Right ventricle myocardium superior (tissue), 1 donor: ENCODE measurements at regions of chr18 and their contacts with region 1.

Region 1: GRCh38 chr18:48951448-48952286 is 902 bp upstream of the SMAD7 start:
- DNase-seq: peak; percentile 92
- ATAC-seq: peak; percentile 79

Region 2: DNA sequence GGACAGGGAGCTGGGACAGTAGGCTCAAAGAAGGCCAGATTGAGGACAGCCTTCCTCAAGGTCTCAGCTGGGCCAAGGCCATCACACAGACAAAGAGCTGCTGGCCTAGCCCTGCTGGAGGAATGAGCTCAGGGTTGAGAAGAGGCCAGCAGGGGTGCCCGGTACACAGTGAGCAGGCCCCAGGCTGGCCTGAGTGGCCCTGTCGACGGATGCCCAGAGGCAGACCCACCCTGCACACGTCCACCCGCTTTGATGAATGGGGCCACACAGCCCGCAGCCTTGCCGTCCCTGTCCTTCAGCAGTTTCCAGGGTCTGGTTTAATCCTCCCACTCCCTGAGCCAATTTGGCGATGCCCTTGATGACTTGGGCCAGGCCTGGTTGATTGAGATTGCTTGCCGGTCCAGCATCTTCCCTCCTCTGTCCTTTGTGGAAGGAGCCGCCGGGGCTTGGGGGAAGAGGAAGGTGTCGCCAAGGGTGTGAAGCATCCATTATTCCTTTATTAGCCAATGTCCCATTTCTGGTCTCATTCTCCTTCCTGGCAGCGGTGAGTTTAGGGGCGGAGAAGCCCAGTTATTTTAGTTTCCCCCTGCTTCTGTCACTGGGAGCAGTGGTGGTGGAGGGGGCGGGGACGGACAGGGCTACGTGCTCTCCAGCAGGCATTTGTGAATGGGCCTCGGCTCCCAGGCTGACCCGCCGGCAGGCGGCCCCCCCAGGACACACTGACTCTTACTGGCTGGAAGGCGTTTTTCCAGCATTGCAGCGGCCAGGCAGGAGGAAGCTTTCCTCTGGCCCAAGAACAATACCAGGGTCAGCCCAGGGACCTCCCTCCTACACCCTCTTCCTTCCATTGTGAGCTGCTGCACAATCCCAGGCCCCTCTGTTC is 271.1 kb before region 1 on chr18:
- intact Hi-C with region 1: loop called (anchors 5 kb)
- DNase-seq: peak; percentile 89
- ATAC-seq: peak; percentile 88

Region 3: GRCh38 chr18:48781163-48781987 is 170.3 kb before region 1 on chr18:
- intact Hi-C with region 1: loop called (anchors 5 kb)
- DNase-seq: peak; percentile 94
- ATAC-seq: peak; percentile 77

Region 4: GRCh38 chr18:48834413-48835031 is 117.1 kb before region 1 on chr18:
- intact Hi-C with region 1: loop called (anchors 10 kb)
- DNase-seq: peak; percentile 79
- ATAC-seq: peak; percentile 60

Region 5: DNA sequence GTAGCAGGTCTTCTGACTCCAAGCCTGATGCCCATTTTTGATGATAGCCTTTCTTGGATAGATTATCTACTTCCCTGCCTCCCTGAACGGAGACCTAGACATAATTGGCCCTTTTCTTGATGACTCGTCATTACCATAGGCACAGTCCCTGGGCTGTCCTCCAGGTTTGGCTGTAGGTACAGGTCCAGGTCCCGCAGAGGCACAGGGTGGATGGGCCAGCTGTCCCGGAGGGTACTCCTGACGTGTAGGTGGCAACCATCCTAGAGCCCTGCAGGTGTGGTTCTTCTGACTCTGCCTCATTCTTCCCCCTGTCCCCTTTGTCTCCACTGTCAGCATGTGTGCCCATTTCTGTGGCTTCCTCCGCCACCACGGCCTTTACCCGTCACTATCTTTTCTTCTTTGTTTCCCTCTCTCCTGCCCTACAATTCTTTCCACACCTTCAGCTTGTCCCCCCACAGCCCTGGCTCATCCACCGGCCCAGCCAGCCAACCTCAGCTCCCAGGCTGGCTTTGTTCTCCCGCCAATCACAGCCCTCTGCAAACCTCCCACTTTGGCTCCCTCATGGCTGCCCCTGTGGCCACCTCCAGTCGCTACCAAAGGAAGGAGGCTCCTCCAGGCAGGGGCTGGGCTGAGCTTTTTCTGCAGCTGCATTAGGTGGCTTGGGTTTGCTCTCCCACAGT is 103.7 kb before region 1 on chr18:
- intact Hi-C with region 1: no loop called
- DNase-seq: no peak
- ATAC-seq: no peak